H1 (cell line): ENCODE measurements at regions of chr9 and their contacts with region 1.

Region 1: DNA sequence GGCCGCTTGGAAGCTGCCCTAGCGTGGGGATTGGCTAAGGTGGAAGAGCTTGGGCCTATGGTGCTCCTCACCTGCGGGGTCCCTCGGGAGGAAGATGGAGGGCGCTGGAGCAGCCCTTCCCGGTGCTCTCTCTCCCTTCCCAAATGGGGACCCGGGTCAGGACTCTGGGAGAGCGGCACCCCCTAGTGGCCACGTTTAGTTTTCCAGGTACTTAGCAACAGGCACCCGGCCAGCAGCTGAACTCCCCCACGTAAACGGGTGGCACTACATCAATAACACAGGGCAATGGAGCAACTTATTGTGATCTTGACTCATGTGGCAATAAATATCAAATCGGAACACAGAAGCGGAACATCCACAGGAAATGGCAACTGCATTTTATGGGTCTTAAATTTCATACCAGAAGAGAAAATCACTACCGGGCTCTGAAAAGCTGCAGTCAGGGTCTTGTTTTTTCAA is 316.6 kb downstream of the AGTPBP1 start:
- DNase-seq: peak; percentile 74 to 98
- H3K4me3 ChIP-seq: no peak overlapping the region
- H3K27ac ChIP-seq: no peak overlapping the region
- H3K4me1 ChIP-seq: peaks cover 0 to 4% (median under 1%) of the 10 kb centered on the region in 4 experiments; a peak in 2 of 7 replicates
- H3K27me3 ChIP-seq: no peaks in the 10 kb centered on the region
- CTCF ChIP-seq: peak; percentile 65 to 93 (median 78)
- EP300 ChIP-seq: no peak
- POLR2A ChIP-seq: no peak
- RAD21 ChIP-seq: peak; percentile 94 to 96

Region 2: DNA sequence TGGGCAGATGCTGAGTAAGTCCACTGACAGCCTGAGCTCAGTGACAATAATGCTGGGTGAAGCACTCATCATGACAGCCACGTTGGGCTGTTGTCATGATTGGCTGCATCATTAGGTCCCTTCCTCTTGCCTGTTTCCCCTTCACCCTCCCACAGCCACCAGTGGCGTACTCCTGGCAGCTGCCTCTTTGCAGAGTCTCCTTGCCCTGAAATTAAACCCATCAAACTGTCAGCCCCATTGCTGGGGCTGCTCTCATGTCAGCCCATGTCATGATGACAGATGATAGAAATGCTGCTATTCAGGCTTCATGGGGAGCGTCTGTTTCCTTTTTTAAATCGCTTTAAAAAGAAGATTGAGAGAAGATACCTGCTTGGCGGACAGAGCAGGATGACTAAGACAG is 10.8 kb before region 1 on chr9:
- CTCF ChIA-PET with region 1: interaction called, 17 read pairs
- POLR2A ChIA-PET with region 1: no interaction called
- DNase-seq: no peak
- H3K4me3 ChIP-seq: no peak overlapping the region
- H3K27ac ChIP-seq: no peak overlapping the region
- H3K4me1 ChIP-seq: 0 out of 7 replicates have a peak, but pooled peaks cover 0 to 2% (median 0%) of the 10 kb centered on the region in 4 experiments
- H3K27me3 ChIP-seq: no peaks in the 10 kb centered on the region; a peak in 1 of 7 replicates
- CTCF ChIP-seq: no peak
- EP300 ChIP-seq: no peak
- POLR2A ChIP-seq: no peak
- RAD21 ChIP-seq: no peak

Region 3: DNA sequence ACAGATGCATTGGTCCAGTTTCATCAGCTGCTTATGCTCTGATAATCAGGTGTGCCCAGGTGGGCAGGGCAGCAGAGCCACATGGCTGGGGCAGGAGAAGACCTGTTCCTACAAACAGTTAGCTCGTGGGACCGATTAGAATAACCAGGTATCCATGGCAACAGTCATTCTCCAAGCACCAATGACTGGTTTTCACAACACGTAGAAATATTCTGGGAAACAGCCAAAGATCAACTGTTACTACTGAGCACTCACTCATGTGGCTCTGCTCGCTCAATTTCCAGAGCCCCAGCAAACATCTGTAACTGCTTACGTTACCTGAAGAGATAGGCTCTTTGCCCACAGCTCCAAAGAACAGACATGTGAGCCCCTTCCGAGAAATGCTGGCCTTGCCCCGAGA is 14.6 kb after region 1 on chr9:
- CTCF ChIA-PET with region 1: interaction called, 17 read pairs
- POLR2A ChIA-PET with region 1: no interaction called
- DNase-seq: no peak
- H3K4me3 ChIP-seq: no peak overlapping the region
- H3K27ac ChIP-seq: no peak overlapping the region
- H3K4me1 ChIP-seq: no peaks in the 10 kb centered on the region; a peak in 1 of 7 replicates
- H3K27me3 ChIP-seq: no peaks in the 10 kb centered on the region
- CTCF ChIP-seq: no peak
- EP300 ChIP-seq: no peak
- POLR2A ChIP-seq: no peak
- RAD21 ChIP-seq: no peak